ENCODE measurements at regions of chr14 and their contacts with region 1.

Region 1: GRCh38 chr14:70640938-70641547 is 673 bp upstream of the TTC9 start:
- DNase-seq: peak in 1 of 2 experiments; percentile 45
- H3K4me3 ChIP-seq: peak overlapping the region; percentile 84
- H3K4me3 Mint-ChIP-seq: peak overlapping the region; percentile 91
- H3K27ac Mint-ChIP-seq: peak overlapping the region; percentile 37
- H3K4me1 ChIP-seq: peaks cover 6% of the 10 kb centered on the region; the same call in 1 of the 2 replicates
- H3K4me1 Mint-ChIP-seq: peaks cover 13% of the 10 kb centered on the region
- H3K27me3 ChIP-seq: no peaks in the 10 kb centered on the region
- H3K27me3 Mint-ChIP-seq: peaks cover 4% of the 10 kb centered on the region
- CTCF ChIP-seq: no peak

Region 2: GRCh38 chr14:70665191-70665916 is 24.3 kb after region 1 on chr14:
- CTCF ChIA-PET with region 1: no interaction called
- POLR2A ChIA-PET with region 1: no interaction called
- intact Hi-C with region 1: loop called (anchors 2 kb)
- DNase-seq: peak; percentile 83 to 85
- H3K4me3 ChIP-seq: no peak overlapping the region
- H3K4me3 Mint-ChIP-seq: peak overlapping the region; percentile 50
- H3K27ac Mint-ChIP-seq: peak overlapping the region; percentile 91
- H3K4me1 ChIP-seq: peaks cover 46% of the 10 kb centered on the region
- H3K4me1 Mint-ChIP-seq: peaks cover 34% of the 10 kb centered on the region
- H3K27me3 ChIP-seq: no peaks in the 10 kb centered on the region
- H3K27me3 Mint-ChIP-seq: no peaks in the 10 kb centered on the region
- CTCF ChIP-seq: no peak

Region 3: GRCh38 chr14:70809543-70810244 is 168.7 kb after region 1 on chr14:
- CTCF ChIA-PET with region 1: interaction called, 4 read pairs
- POLR2A ChIA-PET with region 1: interaction called, 3 read pairs
- intact Hi-C with region 1: loop called (anchors 5 kb)
- DNase-seq: peak; percentile 99
- H3K4me3 ChIP-seq: peak overlapping the region; percentile 96
- H3K4me3 Mint-ChIP-seq: no peak overlapping the region
- H3K27ac Mint-ChIP-seq: no peak overlapping the region
- H3K4me1 ChIP-seq: peaks cover 27% of the 10 kb centered on the region
- H3K4me1 Mint-ChIP-seq: peaks cover 6% of the 10 kb centered on the region
- H3K27me3 ChIP-seq: no peaks in the 10 kb centered on the region
- H3K27me3 Mint-ChIP-seq: no peaks in the 10 kb centered on the region
- CTCF ChIP-seq: no peak

Measured in Caco-2 (cell line).